Heart left ventricle (tissue), 16 donors: ENCODE measurements at regions of chr10 and their contacts with region 1.

Region 1: GRCh38 chr10:77165445-77166208 is 472.0 kb downstream of the KCNMA1 start:
- DNase-seq: peak in 3 of 5 donors; percentile 21 to 29 (median 25)
- ATAC-seq: peak in 3 of 4 donors; percentile 53 to 81 (median 76)
- H3K4me3 ChIP-seq: no peak overlapping the region
- H3K27ac ChIP-seq: no peak overlapping the region
- H3K4me1 ChIP-seq: peaks cover 0 to 4% (median 0%) of the 10 kb centered on the region in 12 donors
- H3K27me3 ChIP-seq: peaks cover 0 to 11% (median 4%) of the 10 kb centered on the region in 9 donors
- CTCF ChIP-seq: peak; percentile 58 to 84 (median 68)
- POLR2A ChIP-seq: no peak

Region 2: DNA sequence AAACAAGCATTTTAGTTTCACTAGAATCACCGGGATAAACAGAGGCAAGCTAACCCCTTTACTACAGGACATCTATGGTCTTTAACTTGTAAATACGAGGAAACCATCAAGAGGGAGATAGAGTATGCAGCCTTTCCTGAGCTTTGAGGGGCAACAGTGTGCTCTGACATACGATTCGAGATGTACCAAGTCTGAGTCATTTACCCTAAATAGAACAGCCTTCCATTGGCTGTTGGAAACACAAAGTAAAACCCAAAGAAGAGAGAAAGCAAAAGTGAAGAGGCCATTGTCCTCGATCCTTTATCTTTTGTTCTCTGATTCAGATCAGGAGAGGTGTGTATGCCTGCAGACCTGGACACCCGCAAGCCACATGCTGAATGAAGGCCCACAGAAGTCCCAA is 182.5 kb after region 1 on chr10:
- intact Hi-C with region 1: no loop called
- DNase-seq: no peak
- ATAC-seq: no peak
- H3K4me3 ChIP-seq: no peak overlapping the region
- H3K27ac ChIP-seq: no peak overlapping the region
- H3K4me1 ChIP-seq: no peaks in the 10 kb centered on the region
- H3K27me3 ChIP-seq: no peaks in the 10 kb centered on the region
- CTCF ChIP-seq: no peak
- POLR2A ChIP-seq: no peak

Region 3: GRCh38 chr10:77710759-77711682 is 545.4 kb after region 1 on chr10:
- intact Hi-C with region 1: loop called (anchors 2 to 10 kb)
- DNase-seq: peak; percentile 56 to 89 (median 70)
- ATAC-seq: peak; percentile 59 to 98 (median 94)
- H3K4me3 ChIP-seq: peak overlapping the region; percentile 5 to 54 (median 46)
- H3K27ac ChIP-seq: no peak overlapping the region
- H3K4me1 ChIP-seq: peaks cover 0 to 11% (median 5%) of the 10 kb centered on the region in 12 donors
- H3K27me3 ChIP-seq: peaks cover 0 to 49% (median 23%) of the 10 kb centered on the region in 9 donors
- CTCF ChIP-seq: peak; percentile 91 to 98 (median 95)
- POLR2A ChIP-seq: no peak